ENCODE measurements at regions of chr18 and their contacts with region 1.

Region 1: DNA sequence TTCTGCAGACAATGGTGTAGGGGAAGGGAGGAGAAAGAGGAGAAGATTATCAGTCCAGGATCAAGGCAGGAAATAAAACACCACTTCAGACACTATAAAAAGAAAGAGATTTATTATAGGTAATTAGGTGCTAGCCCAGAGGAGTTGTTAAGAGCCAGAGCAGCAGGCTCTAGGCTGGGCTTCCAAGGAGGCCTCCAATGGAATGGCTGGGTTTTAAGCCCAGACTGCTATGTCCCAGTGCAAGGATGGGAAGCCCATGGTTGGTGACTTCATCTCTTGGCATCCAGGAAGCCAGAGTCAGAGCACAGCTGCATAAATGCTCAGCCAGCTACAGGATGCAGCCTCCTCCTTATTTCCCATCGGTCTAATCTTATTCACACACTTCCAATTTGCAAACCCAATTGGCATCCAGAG is 95.6 kb downstream of the LAMA3 start:
- DNase-seq: no peak
- ATAC-seq: peak in 1 of 4 donors; percentile 55
- H3K4me3 ChIP-seq: no peak overlapping the region
- H3K27ac ChIP-seq: no peak overlapping the region
- H3K4me1 ChIP-seq: no peaks in the 10 kb centered on the region
- H3K27me3 ChIP-seq: no peaks in the 10 kb centered on the region
- CTCF ChIP-seq: no peak

Region 2: DNA sequence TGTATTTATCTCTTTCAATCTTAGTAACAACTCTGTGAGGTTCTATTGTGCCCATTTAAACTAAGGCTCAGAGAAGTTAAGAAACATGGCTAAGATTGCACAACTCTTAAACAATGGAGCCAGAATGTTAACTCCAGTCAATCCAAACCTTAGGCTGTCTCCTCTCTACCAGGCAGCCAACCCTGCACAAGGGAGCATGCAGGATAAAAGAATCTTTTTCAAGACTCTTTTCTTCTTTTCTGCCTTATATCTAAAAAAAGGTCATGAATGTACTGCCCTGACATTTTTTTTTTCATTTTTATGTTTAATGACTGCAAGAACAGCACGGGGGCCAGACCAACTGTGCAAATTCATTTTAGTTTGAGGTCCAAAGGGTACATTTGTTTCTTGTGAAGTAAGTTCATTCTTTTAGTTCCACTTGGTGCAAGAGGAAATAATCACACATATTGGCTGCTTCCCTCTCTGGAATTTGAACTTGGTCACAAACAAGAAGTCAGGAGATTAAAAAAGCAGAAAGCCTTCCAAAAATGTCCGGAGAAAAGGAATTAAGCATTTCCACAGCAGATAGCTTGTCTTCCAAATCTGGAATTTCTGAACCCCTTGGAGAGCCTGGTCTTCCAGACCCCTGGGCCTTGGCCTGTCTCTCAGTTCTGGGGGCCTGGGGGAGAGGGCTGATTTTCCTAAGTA is 427.8 kb before region 1 on chr18:
- intact Hi-C with region 1: no loop called
- DNase-seq: no peak
- ATAC-seq: peak in 1 of 4 donors; percentile 25
- H3K4me3 ChIP-seq: no peak overlapping the region
- H3K27ac ChIP-seq: peak overlapping the region; percentile 59
- H3K4me1 ChIP-seq: peaks cover 10% of the 10 kb centered on the region
- H3K27me3 ChIP-seq: no peaks in the 10 kb centered on the region
- CTCF ChIP-seq: no peak

Region 3: DNA sequence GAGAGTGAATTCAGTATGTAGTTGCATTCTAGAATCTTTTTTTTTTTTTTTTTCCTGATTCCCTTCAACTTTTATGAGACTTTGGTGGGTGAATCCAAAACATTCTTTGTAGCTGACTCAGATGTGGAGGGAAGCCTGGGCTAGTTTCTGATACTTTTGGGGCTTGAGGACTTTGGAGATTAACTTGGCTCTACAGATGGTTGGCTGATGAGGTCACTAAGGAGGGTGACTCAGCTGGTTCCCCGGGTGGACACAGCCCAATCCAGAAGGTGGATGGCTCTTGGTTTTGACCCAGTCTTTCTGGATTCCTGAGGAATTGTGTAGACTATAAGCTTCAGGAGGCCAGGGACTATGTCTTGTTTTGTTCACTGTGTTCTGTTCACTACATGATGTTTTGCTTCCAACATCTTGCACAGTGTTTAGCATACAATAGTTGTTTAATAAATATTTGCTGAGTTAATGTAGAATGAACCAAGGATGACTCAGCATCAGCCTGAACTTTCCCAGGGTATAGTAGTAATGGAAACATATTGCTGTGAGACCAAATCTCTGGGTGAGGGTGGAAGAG is 65.1 kb before region 1 on chr18:
- intact Hi-C with region 1: loop called in 1 of 2 experiments (anchors 10 kb)
- DNase-seq: peak in 1 of 2 donors; percentile 28
- ATAC-seq: peak in 2 of 4 donors; percentile 37 to 68
- H3K4me3 ChIP-seq: no peak overlapping the region
- H3K27ac ChIP-seq: no peak overlapping the region
- H3K4me1 ChIP-seq: no peaks in the 10 kb centered on the region
- H3K27me3 ChIP-seq: no peaks in the 10 kb centered on the region
- CTCF ChIP-seq: no peak

Region 4: DNA sequence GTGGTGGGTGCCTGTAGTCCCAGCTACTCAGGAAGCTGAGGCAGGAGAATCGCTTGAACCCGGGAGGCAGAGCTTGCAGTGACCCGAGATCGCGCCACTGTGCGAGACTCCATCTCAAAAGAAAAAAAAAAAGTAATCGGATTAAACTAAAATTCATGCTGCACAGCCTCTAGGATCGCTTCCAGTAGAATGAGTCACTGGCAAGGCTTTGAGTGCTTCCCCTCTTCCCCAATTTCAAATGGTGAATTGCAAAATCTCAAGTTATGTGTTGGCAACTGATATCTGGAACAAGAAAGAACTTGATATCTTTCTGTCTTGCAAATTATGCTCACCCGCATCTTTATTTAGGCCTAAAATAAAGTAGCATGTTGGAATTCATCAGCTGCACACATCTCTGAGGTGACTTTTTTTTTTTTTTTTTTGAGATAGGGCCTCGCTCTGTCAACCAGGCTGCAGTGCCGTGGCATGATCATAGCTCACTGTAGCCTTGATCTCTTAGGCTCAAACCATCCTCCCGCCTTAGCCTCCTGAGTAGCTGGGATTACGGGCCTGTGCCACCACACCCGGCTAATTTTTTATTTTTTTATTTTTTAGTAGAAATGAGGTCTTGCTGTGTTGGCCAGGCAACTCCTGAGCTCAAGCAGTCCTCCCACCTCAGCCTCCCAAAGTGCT is 242.5 kb after region 1 on chr18:
- intact Hi-C with region 1: no loop called
- DNase-seq: peak; percentile 59 to 72
- ATAC-seq: peak in 3 of 4 donors; percentile 63 to 72 (median 71)
- H3K4me3 ChIP-seq: no peak overlapping the region
- H3K27ac ChIP-seq: no peak overlapping the region
- H3K4me1 ChIP-seq: no peaks in the 10 kb centered on the region
- H3K27me3 ChIP-seq: peaks cover 0 to 2% (median 0%) of the 10 kb centered on the region in 3 donors
- CTCF ChIP-seq: no peak

Measured in psoas muscle (tissue), 8 donors.